PC-9 (cell line): ENCODE measurements at regions of chr2 and their contacts with region 1.

Region 1: DNA sequence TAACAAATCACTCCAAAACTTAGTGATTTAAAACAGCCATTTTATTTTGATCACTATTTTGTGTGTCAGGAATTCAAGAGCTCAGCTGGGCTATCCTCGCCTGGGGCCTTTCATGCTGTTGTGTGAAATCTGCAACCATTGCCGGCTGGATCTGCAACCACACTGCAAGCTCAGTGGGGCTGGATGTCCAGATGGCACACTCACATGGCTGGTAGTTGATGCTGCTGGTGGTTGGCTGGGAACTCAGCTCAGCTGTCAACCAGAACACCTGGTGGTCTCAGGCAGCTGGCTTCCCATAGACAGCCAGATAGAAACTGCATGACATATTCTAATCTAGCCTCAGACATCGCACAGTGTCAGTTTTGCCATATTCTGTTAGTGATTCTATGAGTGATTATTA is 30.6 kb upstream of the AP1S3 start:
- DNase-seq: no peak
- H3K4me3 ChIP-seq: no peak overlapping the region
- H3K27ac ChIP-seq: no peak overlapping the region
- H3K4me1 ChIP-seq: peaks cover 12% of the 10 kb centered on the region
- H3K27me3 ChIP-seq: no peaks in the 10 kb centered on the region
- CTCF ChIP-seq: no peak

Region 2: GRCh38 chr2:223488814-223489213 is 379.2 kb before region 1 on chr2:
- CTCF ChIA-PET with region 1: no interaction called
- POLR2A ChIA-PET with region 1: no interaction called
- intact Hi-C with region 1: no loop called
- DNase-seq: no peak
- H3K4me3 ChIP-seq: no peak overlapping the region
- H3K27ac ChIP-seq: no peak overlapping the region
- H3K4me1 ChIP-seq: no peaks in the 10 kb centered on the region
- H3K27me3 ChIP-seq: no peaks in the 10 kb centered on the region
- CTCF ChIP-seq: no peak

Region 3: GRCh38 chr2:225131898-225132297 is 1263.9 kb after region 1 on chr2:
- CTCF ChIA-PET with region 1: no interaction called
- POLR2A ChIA-PET with region 1: interaction called, 11 read pairs
- intact Hi-C with region 1: no loop called
- DNase-seq: no peak
- H3K4me3 ChIP-seq: no peak overlapping the region
- H3K27ac ChIP-seq: no peak overlapping the region
- H3K4me1 ChIP-seq: no peaks in the 10 kb centered on the region
- H3K27me3 ChIP-seq: no peaks in the 10 kb centered on the region
- CTCF ChIP-seq: no peak